ENCODE measurements at regions of chr1 and their contacts with region 1.

Region 1: DNA sequence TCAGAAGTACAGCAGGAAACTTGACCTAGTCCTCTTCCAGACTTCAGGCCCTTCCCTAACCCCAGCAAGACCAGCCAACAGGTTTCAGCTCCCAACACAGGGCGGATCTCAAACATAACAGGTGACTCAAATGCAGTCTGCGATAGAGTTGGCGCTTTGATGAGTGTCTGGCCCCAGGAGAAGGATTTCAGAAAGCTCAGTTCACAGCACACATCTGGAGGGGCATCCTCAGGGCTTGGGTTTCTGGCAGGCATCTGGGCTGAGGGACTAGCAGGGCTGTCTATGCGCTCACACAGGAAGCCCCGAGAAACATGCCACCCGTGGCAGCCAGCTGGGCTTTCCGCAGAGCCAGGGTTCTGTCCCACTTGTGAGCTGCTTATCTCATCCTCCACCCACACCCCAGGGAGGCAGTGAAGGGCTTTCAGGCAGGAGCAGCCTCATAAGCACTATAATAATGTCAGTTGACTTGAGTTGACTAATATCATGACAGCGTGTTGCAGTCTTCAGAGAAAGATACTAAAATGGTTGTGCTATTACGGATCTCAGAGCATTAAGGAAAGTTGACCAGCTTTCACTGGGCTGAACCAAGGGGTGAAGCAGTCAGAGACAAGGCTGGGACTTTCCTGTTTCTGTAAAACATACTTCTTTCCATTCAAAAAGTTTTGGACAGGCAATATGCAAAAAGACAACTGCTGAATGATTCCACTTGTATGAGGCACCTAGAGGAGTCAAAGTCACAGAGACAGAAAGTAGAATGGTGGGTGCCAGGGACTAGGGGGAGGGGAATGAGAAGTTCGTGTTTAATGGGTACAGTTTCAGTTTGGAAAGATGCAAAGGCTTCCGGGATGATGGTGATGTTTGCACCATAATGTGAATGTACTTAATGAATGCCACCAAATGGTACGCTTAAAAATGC is 233.0 kb upstream of the IRF2BP2 start:
- DNase-seq: peak; percentile 49
- ATAC-seq: peak; percentile 65
- H3K4me3 ChIP-seq: no peak overlapping the region
- H3K4me3 Mint-ChIP-seq: peak overlapping the region; percentile 50
- H3K27ac ChIP-seq: no peak overlapping the region
- H3K27ac Mint-ChIP-seq: peak overlapping the region; percentile 11
- H3K4me1 ChIP-seq: peaks cover 25 to 33% of the 10 kb centered on the region in 2 donors
- H3K4me1 Mint-ChIP-seq: peaks cover 40% of the 10 kb centered on the region
- H3K27me3 ChIP-seq: no peaks in the 10 kb centered on the region
- H3K27me3 Mint-ChIP-seq: no peaks in the 10 kb centered on the region
- CTCF ChIP-seq: no peak

Region 2: GRCh38 chr1:234246638-234247116 is 596.3 kb before region 1 on chr1:
- CTCF ChIA-PET with region 1: no interaction called
- POLR2A ChIA-PET with region 1: no interaction called
- intact Hi-C with region 1: no loop called
- DNase-seq: peak; percentile 21
- ATAC-seq: no peak
- H3K4me3 ChIP-seq: no peak overlapping the region
- H3K4me3 Mint-ChIP-seq: no peak overlapping the region
- H3K27ac ChIP-seq: no peak overlapping the region
- H3K27ac Mint-ChIP-seq: no peak overlapping the region
- H3K4me1 ChIP-seq: peaks cover 14 to 34% of the 10 kb centered on the region in 2 donors
- H3K4me1 Mint-ChIP-seq: peaks cover 12% of the 10 kb centered on the region
- H3K27me3 ChIP-seq: peaks cover 0 to 3% (median 0%) of the 10 kb centered on the region in 4 experiments
- H3K27me3 Mint-ChIP-seq: peaks cover 4% of the 10 kb centered on the region
- CTCF ChIP-seq: no peak

Region 3: GRCh38 chr1:234533034-234533891 is 309.7 kb before region 1 on chr1:
- CTCF ChIA-PET with region 1: no interaction called
- POLR2A ChIA-PET with region 1: interaction called, 10 read pairs
- intact Hi-C with region 1: no loop called
- DNase-seq: no peak
- ATAC-seq: no peak
- H3K4me3 ChIP-seq: no peak overlapping the region
- H3K4me3 Mint-ChIP-seq: no peak overlapping the region
- H3K27ac ChIP-seq: no peak overlapping the region
- H3K27ac Mint-ChIP-seq: no peak overlapping the region
- H3K4me1 ChIP-seq: peaks cover 3 to 5% of the 10 kb centered on the region in 2 donors
- H3K4me1 Mint-ChIP-seq: peaks cover 8% of the 10 kb centered on the region
- H3K27me3 ChIP-seq: no peaks in the 10 kb centered on the region
- H3K27me3 Mint-ChIP-seq: peaks cover 4% of the 10 kb centered on the region
- CTCF ChIP-seq: no peak

Region 4: DNA sequence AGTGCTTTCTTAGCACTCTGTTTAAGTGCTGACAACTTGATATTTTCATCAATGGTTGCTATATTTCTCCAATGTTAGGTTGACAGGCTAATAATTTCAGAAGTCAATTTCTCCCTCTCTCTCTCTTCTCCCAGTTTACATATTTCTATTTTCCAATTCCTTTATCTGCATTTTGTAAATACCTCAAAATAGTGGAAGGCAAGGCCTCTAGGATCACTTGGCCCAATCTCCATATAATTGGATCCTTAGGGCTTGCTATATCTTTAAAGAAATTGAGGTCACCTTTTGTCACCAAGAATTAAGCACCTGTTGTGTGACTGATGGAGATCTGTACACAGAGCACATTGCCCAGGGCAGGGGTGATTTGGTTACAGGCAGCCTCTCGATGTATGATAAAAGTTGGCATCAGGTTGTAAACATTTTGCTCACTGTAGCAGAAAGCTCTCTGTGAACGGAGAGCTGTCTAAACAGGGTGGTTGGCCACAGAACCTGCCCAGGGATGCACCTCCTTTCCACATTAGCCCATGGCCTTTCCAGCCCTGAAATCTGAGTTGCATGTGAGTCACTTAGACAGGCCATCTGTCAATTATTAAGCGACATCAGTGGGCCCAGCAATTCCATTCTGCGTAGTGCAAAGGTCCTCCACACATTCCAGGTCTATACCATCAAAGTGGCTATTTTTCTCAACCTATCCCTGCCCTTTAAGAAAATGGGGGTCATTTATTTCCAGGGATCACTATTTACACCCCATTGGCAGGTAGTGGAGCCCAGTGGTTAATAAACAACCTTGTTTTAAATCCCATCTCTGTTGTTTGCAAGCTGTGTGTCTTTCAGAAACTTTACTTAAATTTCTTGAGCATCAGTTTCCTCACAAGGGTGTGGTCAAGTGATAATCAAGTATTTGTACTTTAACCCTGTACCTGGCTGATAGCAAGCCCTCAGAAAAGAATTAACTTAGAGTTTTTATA is 203.9 kb before region 1 on chr1:
- CTCF ChIA-PET with region 1: no interaction called
- POLR2A ChIA-PET with region 1: no interaction called
- intact Hi-C with region 1: no loop called
- DNase-seq: no peak
- ATAC-seq: no peak
- H3K4me3 ChIP-seq: no peak overlapping the region
- H3K4me3 Mint-ChIP-seq: no peak overlapping the region
- H3K27ac ChIP-seq: no peak overlapping the region
- H3K27ac Mint-ChIP-seq: no peak overlapping the region
- H3K4me1 ChIP-seq: no peaks in the 10 kb centered on the region
- H3K4me1 Mint-ChIP-seq: no peaks in the 10 kb centered on the region
- H3K27me3 ChIP-seq: no peaks in the 10 kb centered on the region
- H3K27me3 Mint-ChIP-seq: no peaks in the 10 kb centered on the region
- CTCF ChIP-seq: no peak

Region 5: DNA sequence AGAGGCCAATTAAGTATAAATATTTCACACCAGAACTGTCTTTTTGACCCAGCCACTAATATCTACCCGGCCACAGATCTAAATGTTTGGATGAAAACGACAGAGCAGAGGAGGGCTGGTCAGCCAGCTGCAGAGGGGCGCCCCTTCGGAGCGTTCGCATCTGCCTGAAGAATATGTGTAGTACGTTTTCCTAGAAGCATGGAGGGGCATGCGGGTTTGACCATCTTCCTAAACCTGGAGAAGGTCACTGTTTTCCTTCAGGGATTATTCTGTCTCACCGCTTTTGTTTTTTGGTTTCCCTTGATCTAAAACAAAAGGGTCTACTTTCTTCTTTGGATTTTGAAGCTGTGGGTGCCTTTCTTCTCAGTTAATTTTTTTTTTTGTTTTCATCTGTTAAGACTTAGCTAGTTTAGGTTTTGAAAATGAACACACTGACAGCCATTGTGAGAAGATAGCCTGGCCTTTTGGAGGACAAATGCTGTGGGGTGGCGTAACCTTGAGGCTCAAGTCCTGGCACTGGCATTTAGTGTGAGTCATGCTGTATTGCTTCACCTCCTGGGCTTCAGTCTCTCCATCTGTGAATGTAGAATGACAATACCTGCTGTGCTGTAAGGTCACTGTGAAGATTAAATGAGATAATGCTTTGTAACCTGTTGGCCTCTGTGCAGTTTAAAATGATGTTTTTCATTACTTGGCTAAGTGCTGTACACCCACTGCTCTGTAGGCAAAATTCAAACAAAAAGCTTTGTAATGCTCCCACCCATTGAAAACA is 158.9 kb before region 1 on chr1:
- CTCF ChIA-PET with region 1: no interaction called
- POLR2A ChIA-PET with region 1: no interaction called
- intact Hi-C with region 1: no loop called
- DNase-seq: no peak
- ATAC-seq: no peak
- H3K4me3 ChIP-seq: no peak overlapping the region
- H3K4me3 Mint-ChIP-seq: no peak overlapping the region
- H3K27ac ChIP-seq: no peak overlapping the region
- H3K27ac Mint-ChIP-seq: no peak overlapping the region
- H3K4me1 ChIP-seq: no peaks in the 10 kb centered on the region
- H3K4me1 Mint-ChIP-seq: no peaks in the 10 kb centered on the region
- H3K27me3 ChIP-seq: no peaks in the 10 kb centered on the region
- H3K27me3 Mint-ChIP-seq: no peaks in the 10 kb centered on the region
- CTCF ChIP-seq: no peak